Pancreas (tissue), 10 donors: ENCODE measurements at regions of chr14 and their contacts with region 1.

Region 1: GRCh38 chr14:50109342-50109741 is 7.0 kb downstream of the VCPKMT start:
- DNase-seq: no peak
- ATAC-seq: no peak
- H3K4me3 ChIP-seq: no peak overlapping the region
- H3K27ac ChIP-seq: no peak overlapping the region
- H3K4me1 ChIP-seq: peaks cover 0 to 5% (median 4%) of the 10 kb centered on the region in 3 donors
- H3K27me3 ChIP-seq: no peaks in the 10 kb centered on the region
- CTCF ChIP-seq: no peak

Region 2: DNA sequence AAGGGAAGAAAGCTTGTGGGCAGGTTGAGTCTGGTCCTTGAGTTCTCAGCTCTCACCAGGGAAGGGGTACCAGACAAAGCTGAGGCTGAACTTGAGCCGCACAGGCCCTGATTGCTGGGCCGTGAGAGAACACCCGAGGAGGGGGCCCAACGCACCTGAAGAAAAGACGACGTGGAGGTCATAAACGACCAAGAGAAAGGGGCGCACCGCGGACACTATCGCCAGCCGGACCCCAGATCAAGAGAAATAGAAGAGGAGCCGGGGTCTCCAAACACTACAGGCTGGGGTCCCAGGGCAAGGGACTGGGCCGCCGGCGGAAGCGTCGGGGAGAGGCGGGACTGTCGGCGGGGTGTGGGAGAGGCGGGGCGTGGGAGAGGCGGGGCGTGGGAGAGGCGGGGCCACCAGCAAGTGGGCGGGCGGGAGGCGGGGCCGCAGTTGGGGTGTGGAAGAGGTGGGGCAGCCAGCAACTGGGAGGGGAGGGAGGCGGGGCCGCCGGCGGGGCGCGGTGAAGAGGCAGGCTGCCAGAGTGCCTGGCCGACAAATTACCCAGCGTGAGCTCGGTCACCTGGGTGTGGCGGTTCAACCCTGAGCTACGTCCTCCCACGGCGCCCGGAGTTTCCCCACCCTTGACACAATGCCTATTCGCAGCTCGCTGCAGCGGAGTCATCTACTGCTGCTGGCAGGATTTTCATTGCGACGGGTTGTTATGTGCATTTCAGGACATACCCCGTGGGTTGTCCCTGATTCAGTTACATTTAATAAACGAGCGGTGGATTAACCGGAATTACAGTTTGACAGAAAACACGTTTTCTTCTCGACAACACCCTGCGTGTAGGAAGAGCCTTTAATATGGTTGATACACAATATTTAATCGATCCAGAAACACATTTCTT is 241.3 kb before region 1 on chr14:
- intact Hi-C with region 1: loop called in 2 of 3 experiments (anchors 5 kb)
- DNase-seq: peak; percentile 96 to 99 (median 98)
- ATAC-seq: peak; percentile 91 to 95 (median 93)
- H3K4me3 ChIP-seq: peak overlapping the region; percentile 27 to 50 (median 45)
- H3K27ac ChIP-seq: peak overlapping the region; percentile 65 to 92 (median 78)
- H3K4me1 ChIP-seq: peaks cover 0 to 11% (median 8%) of the 10 kb centered on the region in 3 donors
- H3K27me3 ChIP-seq: no peaks in the 10 kb centered on the region
- CTCF ChIP-seq: no peak

Region 3: GRCh38 chr14:49879683-49880204 is 229.6 kb before region 1 on chr14:
- intact Hi-C with region 1: loop called in 1 of 3 experiments (anchors 10 kb)
- DNase-seq: peak in 3 of 6 donors; percentile 32 to 56 (median 38)
- ATAC-seq: peak; percentile 71 to 95 (median 90)
- H3K4me3 ChIP-seq: no peak overlapping the region
- H3K27ac ChIP-seq: no peak overlapping the region
- H3K4me1 ChIP-seq: no peaks in the 10 kb centered on the region
- H3K27me3 ChIP-seq: no peaks in the 10 kb centered on the region
- CTCF ChIP-seq: peak; percentile 29 to 50 (median 36)

Region 4: GRCh38 chr14:50237427-50237826 is 128.1 kb after region 1 on chr14:
- intact Hi-C with region 1: no loop called
- DNase-seq: no peak
- ATAC-seq: no peak
- H3K4me3 ChIP-seq: no peak overlapping the region
- H3K27ac ChIP-seq: no peak overlapping the region
- H3K4me1 ChIP-seq: no peaks in the 10 kb centered on the region
- H3K27me3 ChIP-seq: no peaks in the 10 kb centered on the region
- CTCF ChIP-seq: no peak